Naive thymus-derived CD8-positive, alpha-beta T cell (primary cell): ENCODE measurements at regions of chr15 and their contacts with region 1.

Region 1: GRCh38 chr15:74889883-74890664 is at the start of gene MPI:
- DNase-seq: peak; percentile 74 to 91 (median 80)
- ATAC-seq: peak; percentile 95 to 97
- H3K4me3 Mint-ChIP-seq: peak within 1 kb of the TSS; percentile 82 to 96 (median 89)
- H3K27ac Mint-ChIP-seq: peak within 1 kb of the TSS; percentile 87 to 97 (median 92)
- H3K4me1 Mint-ChIP-seq: peaks cover 17 to 54% (median 54%) of the 10 kb centered on the region in 4 donors
- H3K27me3 Mint-ChIP-seq: no peaks in the 10 kb centered on the region
- polyA plus RNA-seq, gene MPI: 80.5 to 85.6 (median 85.3) TPM

Region 2: DNA sequence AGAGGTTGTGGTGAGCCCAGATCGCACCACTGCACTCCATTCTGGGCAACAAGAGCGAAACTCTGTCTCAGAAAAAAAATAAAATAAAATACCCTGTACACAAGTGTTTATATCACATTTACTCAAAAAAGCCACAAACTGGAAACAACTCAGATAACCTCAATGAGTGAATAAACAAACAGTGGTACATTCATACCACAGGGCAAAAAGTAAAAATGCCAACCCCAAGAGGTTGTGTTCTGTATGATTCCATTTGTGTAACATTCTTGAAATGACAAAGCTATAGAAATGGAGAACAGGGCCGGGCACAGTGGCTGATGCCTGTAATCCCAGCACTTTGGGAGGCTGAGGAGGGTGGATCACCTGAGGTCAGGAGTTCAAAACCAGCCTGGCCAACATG is 207.1 kb before region 1 on chr15:
- POLR2A ChIA-PET with region 1: no interaction called
- DNase-seq: no peak
- ATAC-seq: no peak
- H3K4me3 Mint-ChIP-seq: no peak overlapping the region
- H3K27ac Mint-ChIP-seq: no peak overlapping the region
- H3K4me1 Mint-ChIP-seq: peaks cover 3 to 14% (median 12%) of the 10 kb centered on the region in 4 donors
- H3K27me3 Mint-ChIP-seq: no peaks in the 10 kb centered on the region

Region 3: DNA sequence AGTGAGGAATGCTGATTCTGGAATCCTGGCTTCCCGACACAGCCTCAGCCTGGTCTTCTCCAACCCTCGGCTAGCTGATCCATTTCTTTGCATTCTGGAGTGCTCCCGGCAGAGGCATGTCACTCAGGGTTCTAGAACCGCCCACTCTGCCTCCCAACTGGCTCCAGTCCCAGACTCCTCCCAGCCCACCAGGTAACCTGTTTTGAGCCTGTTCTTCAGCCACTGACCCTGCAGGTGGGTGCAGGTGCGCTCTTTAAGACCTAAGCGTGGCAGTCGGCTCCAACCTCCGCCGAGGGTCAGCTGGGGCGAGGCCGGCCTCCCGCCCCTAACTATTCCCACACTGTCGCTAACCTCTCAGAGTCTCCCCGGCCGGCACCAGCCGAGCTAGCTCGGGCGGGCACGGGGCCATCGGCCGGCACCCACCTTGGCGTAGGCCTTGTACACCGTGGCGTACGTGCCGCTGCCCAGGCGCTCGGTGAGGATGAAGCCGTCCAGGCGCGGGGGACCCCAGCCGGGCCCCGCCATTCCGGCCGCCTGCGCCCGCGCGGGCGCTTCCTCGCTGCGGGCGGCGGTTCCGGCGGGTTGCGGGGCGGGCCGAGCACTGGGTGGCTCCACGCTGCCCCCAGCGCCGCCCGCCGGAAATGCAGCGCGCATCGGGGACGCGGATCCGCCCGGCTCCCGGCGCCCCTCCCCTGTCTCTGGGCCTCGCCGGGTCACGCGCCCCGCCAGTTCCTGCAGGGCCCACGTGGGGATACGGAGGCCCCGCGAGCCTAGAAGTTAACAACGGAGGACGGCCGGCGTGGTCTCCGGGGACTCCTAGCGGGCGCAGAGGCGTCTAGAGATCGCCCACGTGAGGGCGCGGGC is 47.3 kb before region 1 on chr15 and contains the start of gene ULK3:
- POLR2A ChIA-PET with region 1: interaction called, 14 read pairs
- DNase-seq: peak; percentile 88 to 95 (median 92)
- ATAC-seq: peak; percentile 87 to 89
- H3K4me3 Mint-ChIP-seq: peak within 1 kb of the TSS; percentile 85 to 93 (median 88)
- H3K27ac Mint-ChIP-seq: peak within 1 kb of the TSS; percentile 84 to 98 (median 96)
- H3K4me1 Mint-ChIP-seq: peaks cover 30 to 56% (median 53%) of the 10 kb centered on the region in 4 donors
- H3K27me3 Mint-ChIP-seq: no peaks in the 10 kb centered on the region
- polyA plus RNA-seq, gene ULK3: 16.3 to 32.2 (median 16.6) TPM

Region 4: DNA sequence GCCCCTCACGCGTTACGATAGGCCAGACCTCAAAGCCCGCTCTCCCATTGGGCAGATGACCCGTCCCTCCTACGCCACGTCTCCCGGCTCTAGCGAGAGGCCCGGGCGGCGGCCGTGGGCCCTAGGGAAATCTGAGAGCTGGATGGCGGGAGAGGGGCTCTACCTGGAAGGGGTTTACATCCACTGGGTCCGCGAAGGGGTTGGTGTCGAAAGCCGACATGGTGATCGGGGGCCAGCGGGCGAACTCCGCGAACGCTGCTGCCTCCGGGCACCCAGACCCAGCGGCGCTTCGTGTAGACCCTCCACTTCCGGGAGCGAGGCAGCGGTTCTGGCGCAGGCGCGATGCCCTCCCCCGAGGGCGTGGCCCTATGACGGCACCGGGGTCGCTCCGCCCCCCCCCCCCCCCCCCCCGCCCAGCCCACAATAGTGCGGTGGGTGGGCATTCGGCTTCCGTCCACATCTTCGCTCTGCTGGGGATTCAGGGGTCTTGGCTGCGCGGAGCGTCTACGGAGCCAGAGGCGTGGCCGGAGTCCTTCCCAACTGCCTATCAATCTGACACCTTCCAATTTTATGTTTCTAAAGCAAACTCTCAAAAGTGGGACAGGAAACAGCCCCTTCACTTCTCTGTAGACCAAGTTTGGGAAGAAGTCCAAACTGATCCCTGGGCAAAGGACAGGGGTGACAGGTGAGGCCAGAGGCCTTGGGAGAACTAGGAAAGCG is 16.9 kb before region 1 on chr15 and contains the start of gene SCAMP2:
- POLR2A ChIA-PET with region 1: interaction called, 13 read pairs
- DNase-seq: peak; percentile 82 to 98 (median 91)
- ATAC-seq: peak; percentile 96
- H3K4me3 Mint-ChIP-seq: peak within 1 kb of the TSS; percentile 94 to 100 (median 98)
- H3K27ac Mint-ChIP-seq: peak within 1 kb of the TSS; percentile 90 to 99 (median 96)
- H3K4me1 Mint-ChIP-seq: peaks cover 15 to 56% (median 46%) of the 10 kb centered on the region in 4 donors
- H3K27me3 Mint-ChIP-seq: no peaks in the 10 kb centered on the region
- polyA plus RNA-seq, gene SCAMP2: 109 to 121 (median 119) TPM

Region 5: GRCh38 chr15:74906446-74907162 is 16.5 kb after region 1 on chr15 and contains the start of gene FAM219B:
- POLR2A ChIA-PET with region 1: interaction called, 28 read pairs
- DNase-seq: peak; percentile 37 to 85 (median 66)
- ATAC-seq: peak; percentile 79 to 83
- H3K4me3 Mint-ChIP-seq: peak within 1 kb of the TSS; percentile 94 to 99 (median 98)
- H3K27ac Mint-ChIP-seq: peak within 1 kb of the TSS; percentile 93 to 99 (median 97)
- H3K4me1 Mint-ChIP-seq: peaks cover 24 to 46% (median 42%) of the 10 kb centered on the region in 4 donors
- H3K27me3 Mint-ChIP-seq: no peaks in the 10 kb centered on the region
- polyA plus RNA-seq, gene FAM219B: 18.8 to 22.3 (median 20.7) TPM

Region 6: DNA sequence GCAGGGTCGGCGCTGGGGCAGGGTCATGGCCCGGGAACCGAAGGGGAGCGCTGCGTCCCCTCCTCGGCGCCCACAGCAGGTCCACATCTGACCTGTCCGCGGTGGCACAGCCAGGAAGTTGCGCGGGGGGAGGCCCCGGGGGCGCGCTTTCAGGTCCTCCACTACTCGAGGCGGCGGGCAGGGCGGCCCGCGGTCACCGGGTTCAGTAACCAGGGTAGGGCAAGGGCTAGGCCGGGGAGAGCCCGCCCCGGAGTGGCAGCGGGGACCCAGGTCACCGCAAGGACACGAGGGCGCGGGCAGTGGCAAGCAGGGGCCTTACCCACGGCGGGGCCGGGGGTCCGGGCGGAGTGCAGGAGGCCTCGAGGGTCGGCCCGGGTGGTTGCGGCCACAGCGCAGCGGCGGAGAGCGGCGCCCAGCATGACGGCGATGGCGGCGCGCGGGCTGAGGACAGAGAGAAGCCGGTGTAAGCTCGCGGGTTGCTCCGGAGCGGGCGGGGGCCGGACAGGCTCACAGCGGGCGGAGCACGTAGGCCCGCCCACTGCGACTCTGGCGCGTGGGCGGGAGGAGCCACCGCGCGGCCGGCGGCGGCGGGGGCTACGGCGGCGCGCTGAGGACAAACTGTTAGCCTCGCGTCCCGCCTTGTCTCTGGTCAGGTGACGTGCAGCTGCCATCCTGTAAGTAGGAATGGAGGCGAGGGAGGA is 47.7 kb after region 1 on chr15 and contains the start of gene COX5A:
- POLR2A ChIA-PET with region 1: interaction called, 11 read pairs
- DNase-seq: peak; percentile 87 to 94 (median 90)
- ATAC-seq: peak; percentile 94 to 96
- H3K4me3 Mint-ChIP-seq: peak within 1 kb of the TSS; percentile 85 to 96 (median 92)
- H3K27ac Mint-ChIP-seq: peak within 1 kb of the TSS; percentile 73 to 97 (median 94)
- H3K4me1 Mint-ChIP-seq: peaks cover 12 to 39% (median 28%) of the 10 kb centered on the region in 4 donors
- H3K27me3 Mint-ChIP-seq: no peaks in the 10 kb centered on the region
- polyA plus RNA-seq, gene COX5A: 268 to 362 (median 276) TPM

Region 7: GRCh38 chr15:74950078-74951000 is 60.3 kb after region 1 on chr15:
- POLR2A ChIA-PET with region 1: no interaction called
- DNase-seq: peak; percentile 57 to 88 (median 76)
- ATAC-seq: peak; percentile 88 to 96
- H3K4me3 Mint-ChIP-seq: no peak overlapping the region
- H3K27ac Mint-ChIP-seq: peak overlapping the region in 1 of 10 donors; percentile 4
- H3K4me1 Mint-ChIP-seq: peaks cover 5 to 13% (median 9%) of the 10 kb centered on the region in 4 donors
- H3K27me3 Mint-ChIP-seq: peaks cover 0 to under 1% (median 0%) of the 10 kb centered on the region in 5 donors